Mammary epithelial cell (primary cell): ENCODE measurements at regions of chr16 and their contacts with region 1.

Region 1: GRCh38 chr16:50397196-50397595 is 28.4 kb upstream of the BRD7 start:
- DNase-seq: peak; percentile 99
- H3K4me3 ChIP-seq: no peak overlapping the region
- H3K27ac ChIP-seq: peak overlapping the region; percentile 75
- H3K4me1 ChIP-seq: peaks cover 22% of the 10 kb centered on the region
- H3K27me3 ChIP-seq: no peaks in the 10 kb centered on the region
- CTCF ChIP-seq: no peak

Region 2: GRCh38 chr16:50548125-50548908 is 151.1 kb after region 1 on chr16 and contains the start of gene NKD1:
- CTCF ChIA-PET with region 1: no interaction called
- dilution Hi-C with region 1: no loop called
- in situ Hi-C with region 1: no loop called
- intact Hi-C with region 1: loop called (anchors 5 kb)
- DNase-seq: peak; percentile 41
- H3K4me3 ChIP-seq: peak within 1 kb of the TSS; percentile 66 to 82 (median 69)
- H3K27ac ChIP-seq: no peak within 1 kb of the TSS
- H3K4me1 ChIP-seq: peaks cover 4% of the 10 kb centered on the region
- H3K27me3 ChIP-seq: no peaks in the 10 kb centered on the region
- CTCF ChIP-seq: no peak
- total RNA-seq, gene NKD1: under 0.01 to 0.35 TPM